ENCODE measurements at regions of chr1 and their contacts with region 1.

Region 1: GRCh38 chr1:22025368-22026155 is 24.1 kb downstream of the CELA3A start:
- DNase-seq: peak; percentile 88
- H3K4me3 Mint-ChIP-seq: peak overlapping the region; percentile 79
- H3K27ac Mint-ChIP-seq: peak overlapping the region; percentile 93
- H3K4me1 Mint-ChIP-seq: peaks cover 13% of the 10 kb centered on the region
- H3K27me3 Mint-ChIP-seq: no peaks in the 10 kb centered on the region
- CTCF ChIP-seq: no peak

Region 2: DNA sequence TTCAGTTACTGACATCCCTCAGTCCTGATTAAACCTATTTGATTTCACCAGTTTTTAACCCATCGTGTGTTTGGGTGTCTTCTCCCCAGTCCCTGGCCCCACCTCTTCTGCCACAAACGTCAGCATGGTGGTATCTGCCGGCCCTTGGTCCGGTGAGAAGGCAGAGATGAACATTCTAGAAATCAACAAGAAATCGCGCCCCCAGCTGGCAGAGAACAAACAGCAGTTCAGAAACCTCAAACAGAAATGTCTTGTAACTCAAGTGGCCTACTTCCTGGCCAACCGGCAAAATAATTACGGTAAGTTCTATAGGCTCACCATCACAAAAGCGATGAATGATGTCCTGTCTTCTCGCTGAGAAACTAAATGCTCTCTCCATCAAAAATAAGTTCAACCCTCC is 557.0 kb before region 1 on chr1:
- CTCF ChIA-PET with region 1: no interaction called
- POLR2A ChIA-PET with region 1: no interaction called
- intact Hi-C with region 1: no loop called
- DNase-seq: no peak
- H3K4me3 Mint-ChIP-seq: no peak overlapping the region
- H3K27ac Mint-ChIP-seq: no peak overlapping the region
- H3K4me1 Mint-ChIP-seq: no peaks in the 10 kb centered on the region
- H3K27me3 Mint-ChIP-seq: no peaks in the 10 kb centered on the region
- CTCF ChIP-seq: no peak

Region 3: DNA sequence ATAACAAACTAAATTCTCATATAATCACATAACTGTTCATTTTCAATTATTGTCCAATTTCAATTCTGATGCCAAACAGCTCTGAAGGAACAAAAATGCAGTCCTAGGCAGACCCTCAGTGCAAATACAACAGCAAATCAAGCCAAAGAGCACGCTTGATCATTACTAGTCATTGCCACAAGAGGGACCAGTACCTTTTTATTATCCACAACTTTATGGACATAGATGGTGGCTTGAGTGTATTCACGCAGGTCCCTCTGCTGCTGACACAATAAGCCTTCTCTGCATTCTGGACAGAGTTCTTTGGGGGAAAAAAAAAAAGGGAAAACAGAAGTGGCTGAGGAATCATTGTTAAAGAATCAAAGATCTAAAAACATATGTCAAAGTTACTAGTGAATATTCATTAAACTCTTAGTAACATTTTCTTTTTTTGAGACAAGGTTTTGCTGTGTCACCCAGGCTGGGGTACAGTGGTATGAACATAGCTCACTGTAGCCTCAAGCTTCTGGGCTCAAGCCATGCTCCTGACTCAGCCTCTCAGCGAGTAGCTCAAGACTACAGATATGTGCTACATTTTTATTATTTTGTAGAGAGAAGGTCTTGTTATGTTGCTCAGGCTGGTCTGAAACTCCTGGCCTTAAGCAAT is 322.1 kb before region 1 on chr1:
- CTCF ChIA-PET with region 1: interaction called, 4 read pairs
- POLR2A ChIA-PET with region 1: no interaction called
- intact Hi-C with region 1: loop called (anchors 5 kb)
- DNase-seq: peak; percentile 50
- H3K4me3 Mint-ChIP-seq: no peak overlapping the region
- H3K27ac Mint-ChIP-seq: peak overlapping the region; percentile 15
- H3K4me1 Mint-ChIP-seq: no peaks in the 10 kb centered on the region
- H3K27me3 Mint-ChIP-seq: no peaks in the 10 kb centered on the region
- CTCF ChIP-seq: peak; percentile 44

Region 4: GRCh38 chr1:22039594-22040285 is 14.2 kb after region 1 on chr1:
- CTCF ChIA-PET with region 1: interaction called, 7 read pairs
- POLR2A ChIA-PET with region 1: interaction called, 16 read pairs
- intact Hi-C with region 1: no loop called
- DNase-seq: peak; percentile 55
- H3K4me3 Mint-ChIP-seq: no peak overlapping the region
- H3K27ac Mint-ChIP-seq: no peak overlapping the region
- H3K4me1 Mint-ChIP-seq: peaks cover 21% of the 10 kb centered on the region
- H3K27me3 Mint-ChIP-seq: no peaks in the 10 kb centered on the region
- CTCF ChIP-seq: no peak

Region 5: DNA sequence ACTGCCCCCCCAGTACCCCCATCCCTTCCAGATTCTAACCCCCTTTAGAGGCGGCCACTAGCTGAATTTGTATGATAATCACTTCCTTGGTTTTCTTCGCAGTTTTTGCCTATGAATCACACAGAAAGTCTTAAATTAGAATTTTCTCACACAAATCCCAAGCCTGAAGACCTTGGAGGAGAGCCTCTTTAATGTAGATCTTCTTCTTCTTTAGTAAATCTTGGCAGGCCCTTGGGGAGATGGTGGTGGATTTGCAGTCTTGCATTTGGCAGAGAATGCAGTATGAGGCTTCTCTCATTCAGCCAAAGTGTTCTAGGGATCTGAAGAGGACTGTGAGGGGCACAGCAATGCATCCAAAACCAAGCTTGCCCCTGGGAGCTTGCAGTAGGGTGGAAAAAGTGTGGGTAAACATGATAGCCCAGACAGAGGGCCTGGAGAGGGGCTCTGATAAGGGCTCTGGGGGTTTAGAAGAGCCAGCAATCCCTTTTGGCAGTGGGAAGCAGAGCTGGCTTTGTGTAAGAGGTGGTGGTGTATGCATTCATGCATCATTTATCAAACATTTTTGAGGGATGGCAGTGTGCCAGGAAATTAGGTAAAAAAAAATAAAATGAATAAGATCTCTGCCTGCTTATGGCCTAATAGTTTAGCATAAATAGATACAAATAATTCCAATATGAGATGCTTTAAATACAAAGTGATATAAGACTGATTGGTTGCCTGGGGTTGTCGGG is 19.3 kb after region 1 on chr1:
- CTCF ChIA-PET with region 1: interaction called, 7 read pairs
- POLR2A ChIA-PET with region 1: interaction called, 16 read pairs
- intact Hi-C with region 1: no loop called
- DNase-seq: peak; percentile 73
- H3K4me3 Mint-ChIP-seq: no peak overlapping the region
- H3K27ac Mint-ChIP-seq: no peak overlapping the region
- H3K4me1 Mint-ChIP-seq: peaks cover 32% of the 10 kb centered on the region
- H3K27me3 Mint-ChIP-seq: no peaks in the 10 kb centered on the region
- CTCF ChIP-seq: no peak

Region 6: DNA sequence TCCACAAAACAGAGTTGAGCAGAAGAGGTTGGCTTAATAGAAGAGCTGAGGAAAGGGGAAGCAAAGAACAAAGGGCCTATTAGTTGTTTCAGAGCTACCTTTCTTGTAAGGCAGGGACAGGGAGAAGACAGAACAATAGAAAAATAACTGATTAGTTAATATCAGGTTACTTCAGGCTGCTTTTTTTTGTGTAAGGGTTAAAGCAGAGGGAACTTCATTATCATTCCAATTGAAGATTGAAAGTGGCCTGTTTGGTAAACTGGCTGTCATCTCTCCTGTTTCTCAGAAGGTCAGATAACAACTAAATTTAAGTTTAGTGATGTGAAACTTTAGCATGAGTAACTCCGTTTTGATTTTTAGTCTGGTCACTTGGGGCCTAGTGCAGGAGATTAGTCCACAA is 49.2 kb after region 1 on chr1:
- CTCF ChIA-PET with region 1: no interaction called
- POLR2A ChIA-PET with region 1: interaction called, 11 read pairs
- intact Hi-C with region 1: no loop called
- DNase-seq: no peak
- H3K4me3 Mint-ChIP-seq: no peak overlapping the region
- H3K27ac Mint-ChIP-seq: peak overlapping the region; percentile 7
- H3K4me1 Mint-ChIP-seq: peaks cover 33% of the 10 kb centered on the region
- H3K27me3 Mint-ChIP-seq: no peaks in the 10 kb centered on the region
- CTCF ChIP-seq: no peak

Measured in MCF 10A (cell line).